ENCODE measurements at regions of chr14 and their contacts with region 1.

Region 1: GRCh38 chr14:105473677-105474482 is 741 bp upstream of the CRIP2 start:
- DNase-seq: peak; percentile 97

Region 2: GRCh38 chr14:105374383-105374782 is 99.5 kb before region 1 on chr14:
- intact Hi-C with region 1: loop called in 1 of 2 experiments (anchors 5 kb)
- DNase-seq: no peak

Region 3: GRCh38 chr14:105439691-105440553 is 34.0 kb before region 1 on chr14:
- intact Hi-C with region 1: no loop called
- DNase-seq: no peak